ENCODE measurements at regions of chr15 and their contacts with region 1.

Region 1: GRCh38 chr15:77607111-77607893 is 25.4 kb downstream of the LINGO1 start:
- DNase-seq: no peak
- H3K4me3 ChIP-seq: no peak overlapping the region
- H3K27me3 ChIP-seq: peaks cover 5% of the 10 kb centered on the region
- CTCF ChIP-seq: no peak

Region 2: DNA sequence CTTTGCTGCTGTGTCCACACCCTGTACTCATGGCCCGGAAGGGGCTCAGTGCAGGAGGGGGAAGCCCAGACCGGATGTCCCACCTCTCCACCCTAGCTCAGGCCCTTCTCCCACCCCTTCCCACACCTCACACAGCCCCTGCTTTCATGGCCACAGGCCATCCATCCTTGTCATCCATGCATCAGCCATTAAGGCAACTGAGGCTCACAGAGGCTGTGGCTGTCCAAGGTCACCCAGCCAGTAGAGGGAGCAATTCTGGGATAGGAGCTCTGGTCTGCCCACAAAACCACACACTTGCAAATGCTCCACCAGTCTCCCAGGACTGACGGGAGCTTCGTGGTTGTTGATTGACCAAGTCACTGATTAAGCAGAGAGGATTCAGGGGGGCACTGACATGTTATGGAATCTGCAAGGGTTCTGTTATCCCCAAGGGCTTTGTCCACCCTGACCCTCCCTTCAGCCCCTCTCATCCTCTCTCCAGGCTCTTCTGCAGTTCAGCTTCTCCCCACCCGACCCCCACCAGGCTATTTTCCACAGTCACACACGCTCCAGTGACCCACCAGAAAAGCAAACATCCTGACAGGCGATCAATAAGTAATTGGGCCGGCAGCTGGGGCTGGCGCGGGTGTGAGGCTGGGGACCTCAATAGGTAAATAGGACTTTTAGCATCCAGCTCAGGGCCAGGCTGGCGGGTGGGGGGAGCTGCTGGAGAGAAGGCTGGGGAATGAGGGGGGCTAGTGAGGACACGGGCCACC is 10.4 kb after region 1 on chr15:
- CTCF ChIA-PET with region 1: interaction called, 21 read pairs
- POLR2A ChIA-PET with region 1: no interaction called
- DNase-seq: no peak
- H3K4me3 ChIP-seq: no peak overlapping the region
- H3K27me3 ChIP-seq: peaks cover 2% of the 10 kb centered on the region
- CTCF ChIP-seq: peak; percentile 44; the same call in 1 of the 2 replicates

Measured in BJ (cell line).